Activated naive CD8-positive, alpha-beta T cell treated with anti-CD3 and anti-CD28 coated beads, Interleukin-2, amount 10 ng/mL, durations not matched to agents 7 days and 5 days (primary cell): ENCODE measurements at regions of chr2 and their contacts with region 1.

Region 1: DNA sequence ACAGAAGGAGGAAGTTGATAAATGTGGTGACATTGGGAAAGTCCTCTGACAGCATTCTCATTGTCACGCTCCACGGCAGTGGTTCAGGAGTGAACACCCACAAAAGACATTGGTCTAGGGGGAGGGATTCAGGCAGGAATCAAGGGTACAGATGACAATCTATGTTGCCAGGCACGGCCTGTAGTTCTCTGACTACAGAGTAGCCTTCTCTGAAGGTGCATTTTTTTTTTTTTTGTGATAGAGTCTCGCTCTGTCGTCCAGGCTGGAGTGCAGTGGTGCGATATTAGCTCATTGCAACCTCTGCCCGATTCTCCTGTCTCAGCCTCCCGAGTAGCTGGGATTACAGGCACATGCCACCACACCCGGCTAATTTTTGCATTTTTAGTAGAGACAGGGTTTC is 7.4 kb upstream of the MOB1A start:
- DNase-seq: no peak
- ATAC-seq: peak; percentile 80
- H3K4me3 Mint-ChIP-seq: peak overlapping the region; percentile 50
- H3K27ac Mint-ChIP-seq: peak overlapping the region; percentile 71
- H3K4me1 Mint-ChIP-seq: peaks cover 17% of the 10 kb centered on the region
- H3K27me3 Mint-ChIP-seq: peaks cover 2% of the 10 kb centered on the region

Region 2: GRCh38 chr2:74198461-74199274 is 12.6 kb after region 1 on chr2 and contains the start of gene MTHFD2:
- POLR2A ChIA-PET with region 1: interaction called, 276 read pairs
- DNase-seq: peak; percentile 94
- ATAC-seq: peak; percentile 89
- H3K4me3 Mint-ChIP-seq: peak within 1 kb of the TSS; percentile 99
- H3K27ac Mint-ChIP-seq: peak within 1 kb of the TSS; percentile 100
- H3K4me1 Mint-ChIP-seq: peaks cover 37% of the 10 kb centered on the region
- H3K27me3 Mint-ChIP-seq: no peaks in the 10 kb centered on the region
- total RNA-seq, gene MTHFD2: 127 to 130 TPM

Region 3: GRCh38 chr2:74221604-74222299 is 35.7 kb after region 1 on chr2:
- POLR2A ChIA-PET with region 1: no interaction called
- DNase-seq: no peak
- ATAC-seq: no peak
- H3K4me3 Mint-ChIP-seq: no peak overlapping the region
- H3K27ac Mint-ChIP-seq: no peak overlapping the region
- H3K4me1 Mint-ChIP-seq: peaks cover 11% of the 10 kb centered on the region
- H3K27me3 Mint-ChIP-seq: no peaks in the 10 kb centered on the region